ENCODE measurements at regions of chrX and their contacts with region 1.

Region 1: DNA sequence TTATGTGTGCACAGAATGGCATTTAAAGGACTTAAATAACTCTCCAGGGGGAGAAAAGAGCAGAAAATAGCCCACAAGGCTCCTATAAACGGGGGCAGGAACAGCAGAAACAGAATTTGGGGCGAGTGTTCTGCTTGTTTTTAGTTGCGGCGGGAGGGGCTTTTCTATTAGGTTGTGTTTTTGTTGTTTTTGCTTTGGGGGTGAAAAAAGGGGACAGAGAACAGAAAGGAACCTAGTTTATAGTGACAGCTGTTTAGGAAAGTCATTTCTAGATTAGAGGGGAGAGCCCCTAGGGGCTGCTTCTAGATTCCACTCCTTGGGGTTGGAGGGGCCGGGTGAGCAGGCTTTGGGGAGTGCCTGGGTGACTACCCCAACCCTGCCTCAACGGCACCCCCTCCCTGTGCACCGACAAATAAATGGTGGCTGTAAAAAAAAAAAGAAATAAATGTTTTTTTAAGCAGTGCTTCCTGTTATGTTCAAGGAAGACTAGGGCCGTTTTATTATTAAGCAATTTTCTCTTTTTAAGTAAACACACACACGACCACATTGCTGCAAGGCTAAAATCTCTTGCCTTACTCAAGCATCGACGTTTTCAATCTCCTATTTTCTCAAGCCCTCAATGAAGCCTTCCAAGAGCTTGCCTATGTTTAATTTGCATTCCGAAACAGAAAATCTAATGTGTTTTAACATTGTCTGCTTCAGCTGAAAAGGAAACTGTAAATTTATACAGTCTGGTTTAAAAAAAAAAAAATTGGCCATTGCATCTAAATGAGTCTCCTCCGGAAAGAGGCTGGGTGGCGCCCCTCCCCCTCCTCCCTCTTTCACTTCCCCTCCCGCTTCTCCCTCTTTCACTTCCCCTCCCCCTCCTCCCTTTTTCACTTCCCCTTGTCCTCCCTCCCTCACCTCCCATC is 123.3 kb upstream of the TBL1X start:
- DNase-seq: peak; percentile 42 to 81 (median 65)
- H3K4me3 ChIP-seq: peak overlapping the region; percentile 55
- H3K4me3 Mint-ChIP-seq: peak overlapping the region; percentile 76 to 93 (median 83)
- H3K27ac ChIP-seq: peak overlapping the region; percentile 59
- H3K27ac Mint-ChIP-seq: peak overlapping the region; percentile 86 to 96 (median 92)
- H3K4me1 ChIP-seq: peaks cover 35% of the 10 kb centered on the region
- H3K4me1 Mint-ChIP-seq: peaks cover 38 to 54% (median 52%) of the 10 kb centered on the region in 3 donors
- H3K27me3 ChIP-seq: no peaks in the 10 kb centered on the region
- H3K27me3 Mint-ChIP-seq: no peaks in the 10 kb centered on the region

Region 2: DNA sequence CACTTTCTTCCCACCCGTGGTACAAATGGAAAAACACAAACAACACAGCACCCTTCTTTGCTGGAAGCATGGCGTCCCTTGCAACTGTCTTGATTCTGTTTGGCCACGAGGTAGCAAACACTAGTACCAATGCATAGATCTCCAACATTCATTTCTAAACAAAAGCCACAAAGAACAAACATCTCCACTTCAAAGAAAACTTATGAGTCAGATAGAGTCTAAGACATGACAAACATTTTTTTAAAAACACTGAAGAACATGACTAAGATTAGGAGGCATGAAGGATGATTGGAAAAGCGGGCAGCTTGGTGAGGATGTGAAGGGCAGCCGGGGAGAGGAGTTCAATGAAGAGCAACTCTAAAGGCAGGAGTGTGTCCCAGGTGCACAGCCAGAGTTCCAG is 110.1 kb before region 1 on chrX:
- CTCF ChIA-PET with region 1: no interaction called
- POLR2A ChIA-PET with region 1: no interaction called
- DNase-seq: no peak
- H3K4me3 ChIP-seq: no peak overlapping the region
- H3K4me3 Mint-ChIP-seq: no peak overlapping the region
- H3K27ac ChIP-seq: no peak overlapping the region
- H3K27ac Mint-ChIP-seq: no peak overlapping the region
- H3K4me1 ChIP-seq: no peaks in the 10 kb centered on the region
- H3K4me1 Mint-ChIP-seq: peaks cover 0 to 6% (median 5%) of the 10 kb centered on the region in 3 donors
- H3K27me3 ChIP-seq: no peaks in the 10 kb centered on the region
- H3K27me3 Mint-ChIP-seq: peaks cover 0 to 2% of the 10 kb centered on the region in 2 donors

Region 3: DNA sequence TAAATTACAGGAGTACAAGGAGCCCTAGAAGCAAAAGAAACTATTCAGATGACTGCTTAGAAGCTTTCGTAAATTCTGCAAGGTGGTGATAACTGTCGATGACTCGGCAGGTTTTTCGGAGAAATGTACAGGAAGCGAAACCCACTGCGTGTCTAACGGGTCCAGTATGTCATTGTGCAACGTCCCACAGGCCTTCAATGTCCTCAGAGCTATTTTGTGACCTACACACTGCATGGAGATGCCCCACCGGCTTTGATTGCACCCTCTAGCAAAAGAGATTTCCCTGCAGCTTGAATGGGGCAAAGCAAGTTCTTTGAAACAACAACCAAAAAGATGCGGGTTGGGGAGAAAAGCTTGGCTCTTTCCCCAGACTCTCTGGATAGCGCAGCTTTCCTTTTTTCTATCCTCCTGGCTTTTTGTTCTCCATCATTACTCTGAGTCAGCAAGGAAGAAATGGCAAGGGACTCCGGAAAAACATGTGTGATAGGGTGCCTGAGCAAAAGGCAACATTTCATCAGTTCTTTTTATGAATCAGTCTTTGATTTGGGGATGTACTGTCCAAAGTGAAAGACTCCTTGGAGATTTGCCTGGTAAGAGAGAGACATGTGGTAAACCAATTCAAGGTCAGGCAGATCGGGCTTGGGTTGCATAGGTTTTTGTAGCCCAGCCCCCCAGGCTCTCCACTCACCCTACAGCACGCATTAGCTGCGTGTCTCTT is 11.3 kb after region 1 on chrX:
- CTCF ChIA-PET with region 1: interaction called, 3 read pairs
- POLR2A ChIA-PET with region 1: interaction called, 15 read pairs
- DNase-seq: peak in 4 of 5 donors; percentile 1 to 54 (median 30)
- H3K4me3 ChIP-seq: peak overlapping the region; percentile 14
- H3K4me3 Mint-ChIP-seq: peak overlapping the region; percentile 19 to 86 (median 75)
- H3K27ac ChIP-seq: peak overlapping the region; percentile 71
- H3K27ac Mint-ChIP-seq: peak overlapping the region; percentile 49 to 91 (median 84)
- H3K4me1 ChIP-seq: peaks cover 26% of the 10 kb centered on the region
- H3K4me1 Mint-ChIP-seq: peaks cover 45 to 51% (median 50%) of the 10 kb centered on the region in 3 donors
- H3K27me3 ChIP-seq: no peaks in the 10 kb centered on the region
- H3K27me3 Mint-ChIP-seq: peaks cover 0 to 1% of the 10 kb centered on the region in 2 donors

Region 4: GRCh38 chrX:9440116-9440844 is 98.7 kb after region 1 on chrX:
- CTCF ChIA-PET with region 1: no interaction called
- POLR2A ChIA-PET with region 1: no interaction called
- DNase-seq: no peak
- H3K4me3 ChIP-seq: no peak overlapping the region
- H3K4me3 Mint-ChIP-seq: no peak overlapping the region
- H3K27ac ChIP-seq: no peak overlapping the region
- H3K27ac Mint-ChIP-seq: no peak overlapping the region
- H3K4me1 ChIP-seq: no peaks in the 10 kb centered on the region
- H3K4me1 Mint-ChIP-seq: no peaks in the 10 kb centered on the region
- H3K27me3 ChIP-seq: no peaks in the 10 kb centered on the region
- H3K27me3 Mint-ChIP-seq: peaks cover 0 to 3% of the 10 kb centered on the region in 2 donors

Region 5: DNA sequence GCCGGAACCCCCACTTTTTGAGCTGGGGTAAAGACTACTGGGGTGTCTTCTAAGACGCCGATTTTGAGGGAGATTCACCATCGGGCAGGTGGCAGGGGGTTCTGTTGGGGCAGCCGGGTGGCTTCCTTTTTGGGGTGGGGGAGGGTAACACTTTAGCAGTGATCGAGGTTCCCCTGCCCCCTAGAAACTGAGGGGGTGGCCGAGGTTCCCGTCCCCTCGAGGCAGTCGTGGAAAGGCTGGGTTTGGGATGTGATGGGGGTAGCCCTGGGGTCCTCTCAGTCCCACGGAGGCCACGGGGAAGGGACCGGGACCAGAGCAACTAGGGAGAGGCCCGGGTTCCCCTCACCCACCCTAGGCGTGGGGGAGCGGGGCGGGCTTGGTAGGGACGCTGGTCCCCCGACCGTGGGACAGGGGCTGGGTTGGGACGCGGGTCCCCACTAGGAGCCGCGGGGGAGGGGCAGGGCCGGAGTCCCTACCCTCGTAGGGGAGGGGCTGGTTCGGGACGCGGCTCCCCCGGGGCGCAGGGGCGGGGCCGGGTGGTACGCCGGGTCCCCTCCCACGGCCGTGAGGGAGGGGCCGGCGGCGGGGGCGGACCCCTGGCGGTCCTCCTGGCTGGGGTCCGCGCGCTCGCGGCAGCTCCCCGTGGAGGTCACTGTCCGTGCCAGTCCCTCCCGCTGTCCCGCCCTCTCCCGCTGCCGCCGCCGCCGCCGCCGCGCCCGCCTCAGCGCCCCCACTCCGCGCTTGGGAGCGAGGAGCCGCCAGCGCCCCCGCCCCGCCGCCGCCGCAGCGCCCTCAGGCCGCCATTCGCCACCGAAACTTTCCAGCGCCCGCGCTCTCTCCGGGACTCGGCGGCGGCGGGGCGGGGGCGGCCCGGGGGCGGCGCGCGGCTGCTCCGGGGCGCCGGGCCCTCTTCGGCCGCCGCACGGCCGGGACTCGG is 123.2 kb after region 1 on chrX and contains the start of gene TBL1X:
- CTCF ChIA-PET with region 1: interaction called, 12 read pairs
- POLR2A ChIA-PET with region 1: interaction called, 43 read pairs
- DNase-seq: peak; percentile 23 to 57 (median 49)
- H3K4me3 ChIP-seq: peak within 1 kb of the TSS; percentile 22
- H3K4me3 Mint-ChIP-seq: peak within 1 kb of the TSS; percentile 76 to 87 (median 82)
- H3K27ac ChIP-seq: peak within 1 kb of the TSS; percentile 54
- H3K27ac Mint-ChIP-seq: peak within 1 kb of the TSS; percentile 58 to 98 (median 85)
- H3K4me1 ChIP-seq: peaks cover 28% of the 10 kb centered on the region
- H3K4me1 Mint-ChIP-seq: peaks cover 43 to 50% (median 47%) of the 10 kb centered on the region in 3 donors
- H3K27me3 ChIP-seq: no peaks in the 10 kb centered on the region
- H3K27me3 Mint-ChIP-seq: peaks cover 0 to 17% of the 10 kb centered on the region in 2 donors
- total RNA-seq, gene TBL1X: 21.3 to 25.0 TPM